Panc1 (cell line): ENCODE measurements at regions of chr2 and their contacts with region 1.

Region 1: DNA sequence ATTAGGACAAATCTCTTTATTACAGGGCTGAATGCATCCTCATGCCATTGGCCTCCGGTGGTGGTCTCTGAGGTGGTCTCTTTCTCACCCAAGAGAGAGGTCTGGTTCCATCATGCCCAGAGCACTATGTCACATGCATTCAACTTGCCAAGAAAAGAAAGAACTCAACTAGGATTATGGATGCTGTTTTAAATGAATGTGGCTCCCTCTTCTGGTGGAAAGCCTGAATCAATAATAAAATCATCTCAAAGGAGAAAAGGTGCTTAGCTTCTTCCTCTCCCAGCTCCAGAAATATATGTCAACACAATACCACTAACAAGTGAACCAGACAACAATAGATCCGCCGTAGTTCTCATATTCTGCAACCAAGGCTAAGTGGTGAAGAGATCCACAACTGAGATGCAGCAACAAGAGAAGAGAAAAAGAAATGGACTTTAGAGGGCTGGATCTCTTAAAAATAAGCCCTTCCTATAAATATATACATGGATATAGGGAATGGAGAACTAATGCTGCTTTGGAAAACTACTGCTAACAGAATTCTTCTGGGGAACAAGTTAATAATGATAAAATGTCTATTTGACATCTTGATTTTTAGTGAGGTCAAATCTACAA is 396.8 kb downstream of the NCKAP5 start:
- DNase-seq: peak; percentile 48
- ATAC-seq: 0 out of 2 replicates have a peak, but pooled peaks have one; percentile 62
- H3K4me3 ChIP-seq: no peak overlapping the region
- H3K27ac ChIP-seq: no peak overlapping the region
- H3K4me1 ChIP-seq: no peaks in the 10 kb centered on the region
- H3K27me3 ChIP-seq: no peaks in the 10 kb centered on the region
- CTCF ChIP-seq: peak; percentile 72

Region 2: DNA sequence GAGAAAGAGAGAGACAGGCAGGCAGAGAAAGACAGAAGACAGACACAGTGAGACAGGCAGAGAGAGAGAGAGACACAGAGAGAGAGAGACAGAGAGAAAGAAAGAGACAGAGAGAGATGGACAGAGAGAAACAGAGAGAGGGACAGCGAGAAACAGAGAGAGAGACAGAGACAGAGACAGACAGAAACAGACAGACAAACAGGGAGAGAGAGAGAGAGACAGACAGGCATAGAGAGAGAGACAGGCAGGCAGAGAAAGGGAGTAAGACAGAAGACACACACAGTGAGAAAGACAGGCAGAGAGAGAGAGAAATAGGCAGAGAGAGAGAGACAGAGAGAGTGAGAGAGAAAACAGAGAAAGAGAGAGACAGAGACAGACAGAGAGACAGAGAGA is 904.4 kb before region 1 on chr2:
- CTCF ChIA-PET with region 1: no interaction called
- POLR2A ChIA-PET with region 1: no interaction called
- in situ Hi-C with region 1: no loop called
- intact Hi-C with region 1: loop called (anchors 2 kb)
- DNase-seq: no peak
- ATAC-seq: peak; percentile 46; the same call in 1 of the 2 replicates
- H3K4me3 ChIP-seq: no peak overlapping the region
- H3K27ac ChIP-seq: no peak overlapping the region
- H3K4me1 ChIP-seq: no peaks in the 10 kb centered on the region
- H3K27me3 ChIP-seq: peaks cover 2% of the 10 kb centered on the region; the same call in 1 of the 2 replicates
- CTCF ChIP-seq: no peak

Region 3: GRCh38 chr2:132547074-132547687 is 624.3 kb before region 1 on chr2:
- CTCF ChIA-PET with region 1: no interaction called
- POLR2A ChIA-PET with region 1: no interaction called
- in situ Hi-C with region 1: no loop called
- intact Hi-C with region 1: loop called (anchors 1 kb)
- DNase-seq: peak; percentile 32
- ATAC-seq: peak; percentile 74
- H3K4me3 ChIP-seq: no peak overlapping the region
- H3K27ac ChIP-seq: no peak overlapping the region
- H3K4me1 ChIP-seq: no peaks in the 10 kb centered on the region
- H3K27me3 ChIP-seq: no peaks in the 10 kb centered on the region
- CTCF ChIP-seq: peak; percentile 83

Region 4: GRCh38 chr2:132651115-132652045 is 520.1 kb before region 1 on chr2:
- CTCF ChIA-PET with region 1: no interaction called
- POLR2A ChIA-PET with region 1: no interaction called
- in situ Hi-C with region 1: no loop called
- intact Hi-C with region 1: loop called (anchors 5 kb)
- DNase-seq: peak; percentile 18
- ATAC-seq: peak; percentile 90
- H3K4me3 ChIP-seq: no peak overlapping the region
- H3K27ac ChIP-seq: no peak overlapping the region
- H3K4me1 ChIP-seq: no peaks in the 10 kb centered on the region
- H3K27me3 ChIP-seq: no peaks in the 10 kb centered on the region
- CTCF ChIP-seq: peak; percentile 76

Region 5: GRCh38 chr2:132670496-132671150 is 500.9 kb before region 1 on chr2:
- CTCF ChIA-PET with region 1: no interaction called
- POLR2A ChIA-PET with region 1: no interaction called
- in situ Hi-C with region 1: no loop called
- intact Hi-C with region 1: loop called (anchors 5 kb)
- DNase-seq: no peak
- ATAC-seq: peak; percentile 63
- H3K4me3 ChIP-seq: peak overlapping the region; percentile 32 to 48
- H3K27ac ChIP-seq: no peak overlapping the region
- H3K4me1 ChIP-seq: peaks cover 6% of the 10 kb centered on the region
- H3K27me3 ChIP-seq: peaks cover 47% of the 10 kb centered on the region
- CTCF ChIP-seq: no peak

Region 6: DNA sequence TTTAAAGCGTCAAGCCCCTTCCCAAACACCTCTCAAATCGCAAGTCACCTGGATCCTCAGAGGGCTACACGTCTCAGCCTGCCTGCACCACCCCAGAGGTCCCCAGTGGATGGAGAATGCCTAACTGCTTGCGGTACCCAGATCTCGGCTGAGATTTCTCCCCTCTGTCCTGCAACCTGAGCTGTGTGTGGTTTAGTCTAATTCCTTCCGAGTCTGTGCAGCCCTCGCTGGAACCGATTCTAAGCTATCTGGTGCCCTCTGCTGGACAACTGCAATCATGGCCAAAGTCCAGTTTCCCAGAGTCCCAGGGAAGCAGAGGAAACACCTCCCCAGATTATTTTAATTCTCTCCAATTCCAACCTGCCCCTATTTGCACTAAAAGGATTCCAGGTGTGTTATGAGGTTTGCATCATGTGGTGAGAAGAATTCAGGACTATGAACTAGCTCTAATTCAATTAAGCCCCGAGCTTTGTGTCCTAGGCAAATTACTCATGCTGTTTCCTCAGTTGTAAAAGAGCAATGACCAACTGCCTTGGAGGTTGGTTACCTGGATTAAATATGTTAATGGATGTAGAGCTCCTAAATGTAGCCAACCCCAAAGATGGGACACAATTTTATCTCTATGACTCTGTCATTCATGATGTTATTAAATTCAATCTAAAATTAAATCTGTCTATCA is 672.9 kb after region 1 on chr2:
- CTCF ChIA-PET with region 1: interaction called, 3 read pairs
- POLR2A ChIA-PET with region 1: no interaction called
- in situ Hi-C with region 1: no loop called
- intact Hi-C with region 1: loop called (anchors 10 kb)
- DNase-seq: peak; percentile 41
- ATAC-seq: peak; percentile 94
- H3K4me3 ChIP-seq: no peak overlapping the region
- H3K27ac ChIP-seq: no peak overlapping the region
- H3K4me1 ChIP-seq: no peaks in the 10 kb centered on the region
- H3K27me3 ChIP-seq: no peaks in the 10 kb centered on the region
- CTCF ChIP-seq: peak; percentile 85